Brain microvascular endothelial cell (primary cell): ENCODE measurements at regions of chr15 and their contacts with region 1.

Region 1: DNA sequence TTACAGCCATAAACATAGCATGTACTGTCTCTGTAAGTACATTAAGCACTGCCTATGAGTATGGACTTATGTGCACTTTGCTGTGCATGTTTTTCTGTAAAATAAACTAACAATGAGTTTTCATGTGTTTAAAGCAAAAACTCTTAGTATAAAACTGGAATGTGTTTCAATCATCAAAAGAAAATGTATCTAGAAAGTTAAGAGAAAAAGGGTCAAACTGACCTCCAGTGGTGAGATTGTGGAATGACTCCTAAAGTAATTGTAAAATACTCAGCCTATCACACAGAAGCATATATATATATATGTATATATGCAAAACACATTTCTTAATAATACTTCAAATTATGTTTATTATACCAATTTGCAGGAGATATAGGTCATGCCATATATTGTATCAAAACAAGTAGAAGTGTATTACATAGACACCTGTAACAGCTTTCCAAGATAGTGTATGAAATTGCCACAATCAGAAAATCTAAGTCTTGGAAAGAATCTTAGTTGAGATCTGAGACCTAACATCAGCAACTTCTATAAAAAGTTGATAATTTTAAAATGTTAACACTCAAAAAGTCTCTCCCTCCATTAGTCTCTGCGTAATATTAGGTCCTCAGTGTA is 199.6 kb downstream of the FMN1 start:
- DNase-seq: peak; percentile 41
- H3K4me3 ChIP-seq: no peak overlapping the region
- H3K27ac ChIP-seq: no peak overlapping the region
- H3K27me3 ChIP-seq: no peaks in the 10 kb centered on the region
- CTCF ChIP-seq: peak; percentile 42

Region 2: DNA sequence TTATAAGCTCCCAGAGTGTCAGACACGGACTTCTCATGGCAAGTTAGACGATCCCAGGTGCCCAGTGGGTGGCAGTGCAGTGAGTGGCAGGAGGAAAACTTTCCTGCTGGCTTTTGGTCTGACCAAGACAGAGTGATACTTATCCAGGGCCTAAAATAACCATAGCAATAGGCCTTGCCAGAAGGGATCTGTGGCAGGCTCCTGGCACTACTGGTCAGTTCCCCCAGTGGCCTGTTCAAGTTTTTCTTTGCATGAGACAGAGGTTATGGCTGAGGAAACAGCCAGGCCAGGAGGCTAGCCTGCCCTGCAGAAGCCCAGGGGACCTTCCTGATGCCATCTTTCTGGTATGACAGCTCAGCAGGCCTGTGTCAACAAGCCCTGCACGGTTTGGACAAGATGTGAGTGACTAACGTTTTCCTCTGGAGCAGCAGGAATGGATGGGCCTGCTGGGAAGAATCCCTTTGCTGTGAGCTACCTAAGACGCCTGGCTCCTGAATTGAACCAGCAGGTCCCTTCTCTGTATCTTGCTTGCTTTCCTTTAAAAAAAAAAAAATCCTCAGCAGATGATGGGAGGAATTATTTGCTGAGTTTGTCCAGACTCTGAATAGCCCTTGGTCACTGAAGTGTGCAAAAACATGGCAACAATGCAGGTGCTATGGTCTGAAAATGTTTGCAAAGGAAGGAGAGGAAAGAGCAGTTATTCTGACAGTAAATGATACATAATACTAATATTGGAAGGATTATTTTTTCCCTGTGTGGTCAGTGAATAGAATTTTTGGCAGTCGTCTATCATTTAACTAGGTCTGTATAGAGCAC is 335.4 kb before region 1 on chr15:
- in situ Hi-C with region 1: loop called (anchors 10 kb)
- DNase-seq: peak; percentile 62
- H3K4me3 ChIP-seq: no peak overlapping the region
- H3K27ac ChIP-seq: peak overlapping the region; percentile 31
- H3K27me3 ChIP-seq: no peaks in the 10 kb centered on the region
- CTCF ChIP-seq: peak; percentile 25

Region 3: GRCh38 chr15:32763295-32763694 is 231.6 kb before region 1 on chr15:
- in situ Hi-C with region 1: no loop called
- DNase-seq: no peak
- H3K4me3 ChIP-seq: no peak overlapping the region
- H3K27ac ChIP-seq: no peak overlapping the region
- H3K27me3 ChIP-seq: no peaks in the 10 kb centered on the region
- CTCF ChIP-seq: no peak

Region 4: DNA sequence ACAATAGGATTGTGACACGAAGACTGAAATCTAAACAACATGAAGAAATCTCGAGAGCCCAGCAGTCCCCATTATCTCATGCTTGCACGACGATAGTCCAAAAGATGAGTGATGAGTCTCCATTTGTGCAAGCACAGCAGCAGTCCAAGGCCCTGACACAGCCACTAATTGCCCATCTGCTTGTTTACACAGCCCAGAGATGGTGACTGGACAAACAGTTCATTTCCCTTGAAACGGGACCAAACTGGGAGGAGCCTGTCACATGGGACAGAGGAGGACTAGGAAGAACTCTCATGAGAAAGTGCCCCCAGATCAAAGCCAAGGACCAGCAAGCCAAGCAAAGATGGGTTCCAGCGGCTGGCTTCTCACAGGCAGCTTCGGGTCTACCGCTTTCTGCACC is 156.1 kb before region 1 on chr15:
- in situ Hi-C with region 1: loop called (anchors 10 kb)
- DNase-seq: peak; percentile 85
- H3K4me3 ChIP-seq: no peak overlapping the region
- H3K27ac ChIP-seq: peak overlapping the region; percentile 67
- H3K27me3 ChIP-seq: no peaks in the 10 kb centered on the region
- CTCF ChIP-seq: no peak